ENCODE measurements at regions of chr17 and their contacts with region 1.

Region 1: GRCh38 chr17:19447085-19447583 is 36.1 kb downstream of the RNF112 start:
- DNase-seq: peak; percentile 86
- H3K4me3 ChIP-seq: no peak overlapping the region
- H3K27ac ChIP-seq: peak overlapping the region; percentile 91
- H3K4me1 ChIP-seq: peaks cover 25% of the 10 kb centered on the region
- H3K27me3 ChIP-seq: no peaks in the 10 kb centered on the region
- CTCF ChIP-seq: peak; percentile 76 to 85
- POLR2A ChIP-seq: no peak

Region 2: DNA sequence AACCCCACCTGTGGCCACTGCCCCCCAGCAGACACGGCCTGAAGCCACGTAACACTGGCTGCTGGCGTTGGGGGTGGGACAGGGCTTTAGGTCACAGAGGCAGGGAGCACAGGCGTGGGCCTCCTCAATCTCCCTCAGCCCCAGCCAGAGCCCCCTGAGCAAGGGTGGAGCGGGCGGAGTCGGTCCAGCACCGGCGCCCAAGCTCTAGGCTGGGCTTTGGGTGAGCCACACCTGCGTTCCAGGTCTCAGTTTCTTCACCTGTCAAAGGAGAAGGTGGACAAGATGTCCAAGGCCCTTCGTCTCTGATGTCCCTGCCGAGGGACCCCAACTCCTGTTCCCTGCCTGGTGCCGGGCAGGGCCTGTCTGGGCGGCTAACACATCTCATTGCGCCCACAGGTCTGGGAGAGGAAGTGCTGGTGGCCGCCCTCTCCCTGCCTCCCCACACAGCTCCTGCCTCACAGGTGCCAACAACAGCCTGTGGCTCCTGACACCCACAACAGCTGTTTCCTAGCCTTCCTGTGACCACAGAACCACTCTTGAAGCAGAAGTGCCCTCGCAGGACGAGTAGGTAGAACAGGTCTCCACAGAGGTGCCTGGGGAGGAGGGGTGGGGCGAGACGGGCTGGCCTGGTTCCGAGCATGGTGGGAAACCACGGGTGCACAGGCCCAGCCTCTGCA is 454.5 kb before region 1 on chr17:
- CTCF ChIA-PET with region 1: no interaction called
- POLR2A ChIA-PET with region 1: no interaction called
- dilution Hi-C with region 1: no loop called
- intact Hi-C with region 1: no loop called
- DNase-seq: no peak
- H3K4me3 ChIP-seq: no peak overlapping the region
- H3K27ac ChIP-seq: no peak overlapping the region
- H3K4me1 ChIP-seq: no peaks in the 10 kb centered on the region
- H3K27me3 ChIP-seq: no peaks in the 10 kb centered on the region
- CTCF ChIP-seq: no peak
- POLR2A ChIP-seq: no peak

Region 3: DNA sequence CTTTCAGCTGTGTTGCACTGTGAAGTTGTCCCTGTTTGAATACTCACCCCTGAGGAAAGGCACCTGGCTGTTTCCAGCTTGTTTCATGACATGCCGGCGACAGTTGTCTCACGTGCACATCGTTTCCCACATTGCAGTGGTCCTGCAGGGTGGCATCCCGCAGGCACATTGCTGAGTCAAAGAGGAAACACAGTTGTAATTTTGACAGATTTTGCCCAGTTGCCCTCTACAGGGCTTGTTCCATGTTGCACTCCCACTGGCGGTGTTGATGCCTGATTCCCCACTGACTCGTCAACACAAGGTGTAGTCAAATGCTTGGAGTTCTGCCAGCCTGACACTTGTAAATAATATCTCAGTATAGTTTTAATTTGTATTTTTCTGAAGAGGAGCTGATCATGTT is 186.2 kb before region 1 on chr17:
- CTCF ChIA-PET with region 1: interaction called, 3 read pairs
- POLR2A ChIA-PET with region 1: no interaction called
- dilution Hi-C with region 1: no loop called
- intact Hi-C with region 1: loop called (anchors 5 kb)
- DNase-seq: peak; percentile 12
- H3K4me3 ChIP-seq: no peak overlapping the region
- H3K27ac ChIP-seq: no peak overlapping the region
- H3K4me1 ChIP-seq: peaks cover 37% of the 10 kb centered on the region
- H3K27me3 ChIP-seq: no peaks in the 10 kb centered on the region
- CTCF ChIP-seq: peak; percentile 8
- POLR2A ChIP-seq: no peak

Region 4: DNA sequence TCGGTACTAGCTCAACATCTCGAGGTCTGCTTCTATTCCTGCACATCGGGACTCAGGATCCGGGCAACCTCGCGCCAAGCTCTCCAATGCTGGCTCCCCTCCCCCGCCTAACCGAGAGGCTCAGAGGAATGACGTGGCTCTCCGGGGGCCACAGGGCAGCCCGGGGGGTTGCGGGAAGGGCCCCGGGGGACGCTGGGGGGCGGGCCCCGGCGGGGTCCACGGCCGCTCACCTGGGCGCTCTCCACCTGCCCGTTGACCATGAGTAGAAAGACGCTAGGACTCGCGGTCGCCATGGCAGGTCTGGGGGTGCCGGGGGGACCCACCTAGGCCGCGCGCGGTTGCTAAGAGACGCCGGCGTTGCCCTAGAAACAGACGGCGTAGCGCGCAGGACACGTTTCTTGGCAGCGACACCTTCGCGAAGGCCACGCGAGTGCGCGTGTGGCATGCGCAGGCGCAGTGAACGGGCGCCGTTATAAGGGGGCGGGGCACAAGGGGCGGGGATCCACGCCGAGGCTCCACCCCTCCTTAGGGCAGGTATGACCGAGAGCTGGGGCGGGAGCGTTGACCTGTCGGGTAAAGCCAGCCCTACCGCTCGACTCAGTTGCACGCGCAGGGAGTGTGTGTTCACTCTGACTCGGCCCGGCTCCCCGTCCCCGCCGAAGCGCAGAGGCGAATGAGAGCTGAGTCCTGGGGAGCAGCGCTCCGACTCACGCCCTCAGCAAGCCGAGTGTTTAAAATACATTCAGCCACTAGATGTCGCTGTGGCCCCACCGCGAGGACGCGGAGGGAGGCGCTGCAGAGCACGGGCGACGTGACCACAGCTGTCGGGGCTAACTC is 84.6 kb before region 1 on chr17 and contains the start of gene B9D1:
- CTCF ChIA-PET with region 1: interaction called, 111 read pairs
- POLR2A ChIA-PET with region 1: no interaction called
- dilution Hi-C with region 1: no loop called
- intact Hi-C with region 1: loop called (anchors 1 kb)
- DNase-seq: peak; percentile 93
- H3K4me3 ChIP-seq: peak within 1 kb of the TSS; percentile 53 to 66 (median 60)
- H3K27ac ChIP-seq: peak within 1 kb of the TSS; percentile 49
- H3K4me1 ChIP-seq: peaks cover 8% of the 10 kb centered on the region
- H3K27me3 ChIP-seq: no peaks in the 10 kb centered on the region
- CTCF ChIP-seq: peak; percentile 88 to 95
- POLR2A ChIP-seq: peak; percentile 10
- total RNA-seq, gene B9D1: 17.9 and 20.5 TPM in 2 replicates

Region 5: DNA sequence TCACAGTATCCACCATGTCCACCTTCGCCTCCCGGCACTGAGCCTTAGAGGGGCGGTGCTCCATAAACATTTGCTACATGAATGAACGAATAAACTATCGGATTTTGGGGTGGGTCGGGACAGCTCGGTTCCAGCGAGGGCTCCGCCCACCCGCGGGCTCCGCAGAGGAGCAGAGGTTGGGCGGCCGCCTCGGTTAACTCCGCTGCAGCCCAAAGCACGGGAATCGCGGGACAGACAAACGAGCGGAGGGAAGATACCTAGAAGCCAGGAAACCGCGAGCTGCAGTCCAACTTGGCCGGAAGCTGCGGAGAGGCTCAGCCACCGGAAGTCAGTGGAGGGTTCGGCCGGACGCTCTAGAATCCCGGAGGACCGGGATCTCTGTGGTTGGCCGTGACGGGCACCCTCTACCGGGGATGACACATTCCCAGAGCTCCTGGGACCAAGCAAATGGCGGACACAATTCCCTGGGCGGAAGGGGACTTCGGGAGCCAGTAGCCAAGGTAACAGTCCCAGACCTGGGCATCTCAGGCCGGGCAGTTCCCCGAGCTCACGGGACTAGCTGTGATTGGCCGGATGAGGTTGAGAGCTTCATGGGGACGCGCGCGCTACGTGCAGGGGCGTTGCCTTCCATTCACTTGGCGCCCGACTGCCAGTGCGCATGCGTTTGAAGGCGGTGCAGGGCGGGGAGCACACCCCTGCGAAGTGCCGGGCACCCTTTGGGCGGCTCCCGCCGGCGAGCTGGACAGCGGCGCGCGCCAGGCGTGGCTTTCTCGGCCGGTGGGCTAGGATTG is 69.3 kb before region 1 on chr17:
- CTCF ChIA-PET with region 1: interaction called, 38 read pairs
- POLR2A ChIA-PET with region 1: no interaction called
- dilution Hi-C with region 1: no loop called
- intact Hi-C with region 1: loop called (anchors 5 kb)
- DNase-seq: peak; percentile 100
- H3K4me3 ChIP-seq: peak overlapping the region; percentile 72 to 94 (median 73)
- H3K27ac ChIP-seq: peak overlapping the region; percentile 59
- H3K4me1 ChIP-seq: peaks cover 7% of the 10 kb centered on the region
- H3K27me3 ChIP-seq: no peaks in the 10 kb centered on the region
- CTCF ChIP-seq: no peak
- POLR2A ChIP-seq: peak; percentile 83

Region 6: GRCh38 chr17:19433727-19434340 is 13.3 kb before region 1 on chr17:
- CTCF ChIA-PET with region 1: interaction called, 14 read pairs
- POLR2A ChIA-PET with region 1: no interaction called
- dilution Hi-C with region 1: no loop called
- intact Hi-C with region 1: no loop called
- DNase-seq: no peak
- H3K4me3 ChIP-seq: no peak overlapping the region
- H3K27ac ChIP-seq: no peak overlapping the region
- H3K4me1 ChIP-seq: no peaks in the 10 kb centered on the region
- H3K27me3 ChIP-seq: peaks cover 2 to 3% of the 10 kb centered on the region in 2 experiments
- CTCF ChIP-seq: no peak
- POLR2A ChIP-seq: no peak

Region 7: GRCh38 chr17:19507775-19508576 is 60.8 kb after region 1 on chr17:
- CTCF ChIA-PET with region 1: no interaction called
- POLR2A ChIA-PET with region 1: no interaction called
- dilution Hi-C with region 1: no loop called
- intact Hi-C with region 1: loop called (anchors 2 kb)
- DNase-seq: peak; percentile 93
- H3K4me3 ChIP-seq: peak overlapping the region; percentile 47 to 82 (median 67)
- H3K27ac ChIP-seq: no peak overlapping the region
- H3K4me1 ChIP-seq: peaks cover 3% of the 10 kb centered on the region
- H3K27me3 ChIP-seq: no peaks in the 10 kb centered on the region
- CTCF ChIP-seq: no peak
- POLR2A ChIP-seq: no peak

Region 8: GRCh38 chr17:19706791-19707727 is 259.9 kb after region 1 on chr17:
- CTCF ChIA-PET with region 1: no interaction called
- POLR2A ChIA-PET with region 1: no interaction called
- dilution Hi-C with region 1: no loop called
- intact Hi-C with region 1: no loop called
- DNase-seq: no peak
- H3K4me3 ChIP-seq: no peak overlapping the region
- H3K27ac ChIP-seq: no peak overlapping the region
- H3K4me1 ChIP-seq: no peaks in the 10 kb centered on the region
- H3K27me3 ChIP-seq: no peaks in the 10 kb centered on the region
- CTCF ChIP-seq: no peak
- POLR2A ChIP-seq: no peak

Measured in endothelial cell of umbilical vein (primary cell).